ENCODE measurements at regions of chr5 and their contacts with region 1.

Region 1: DNA sequence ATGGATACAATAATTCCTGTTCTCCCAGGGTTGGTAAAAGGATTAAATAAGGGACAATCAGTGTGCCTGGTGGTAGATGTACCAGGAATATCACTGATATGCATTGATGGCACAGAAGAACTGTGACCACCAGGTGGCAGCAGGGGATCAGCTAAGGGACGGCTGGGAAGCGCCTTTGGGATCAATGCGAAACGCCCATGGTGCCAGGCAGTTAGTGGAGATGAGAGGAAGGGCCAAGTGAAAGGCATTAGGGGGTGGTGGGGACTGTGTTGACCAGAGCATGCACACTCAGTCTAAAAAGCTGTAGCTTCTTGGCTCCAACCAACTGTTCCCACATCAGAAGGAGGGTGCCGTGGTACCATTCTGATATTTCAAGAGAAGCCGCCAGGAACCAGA is 55.6 kb downstream of the ARHGEF37 start:
- DNase-seq: peak in 1 of 2 donors; percentile 87
- H3K4me3 ChIP-seq: no peak overlapping the region
- H3K27ac ChIP-seq: no peak overlapping the region
- H3K4me1 ChIP-seq: peaks cover 26 to 48% (median 33%) of the 10 kb centered on the region in 4 donors
- H3K27me3 ChIP-seq: no peaks in the 10 kb centered on the region
- CTCF ChIP-seq: peak in 5 of 7 experiments; percentile 56 to 93 (median 81)
- EP300 ChIP-seq: no peak
- POLR2A ChIP-seq: no peak

Region 2: DNA sequence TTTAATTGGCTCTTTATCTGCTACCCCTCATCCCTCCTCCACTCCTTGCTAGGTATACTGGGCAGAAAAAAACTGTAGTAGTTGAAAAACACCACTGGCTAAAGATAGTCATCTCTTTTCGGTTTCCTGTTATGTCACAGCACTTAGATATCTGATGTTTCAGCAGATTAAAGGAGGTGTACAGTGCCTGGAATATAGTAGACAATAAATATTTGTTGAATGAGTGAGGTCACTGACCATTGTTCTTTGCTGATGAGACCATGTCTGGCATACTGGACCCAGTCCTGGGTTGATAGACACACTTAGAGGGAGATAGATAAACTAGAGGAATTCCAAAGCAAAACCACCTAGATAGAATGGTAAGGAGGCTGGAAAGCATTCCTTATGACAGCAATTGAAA is 288.3 kb before region 1 on chr5:
- intact Hi-C with region 1: no loop called
- DNase-seq: no peak
- H3K4me3 ChIP-seq: no peak overlapping the region
- H3K27ac ChIP-seq: peak overlapping the region in 2 of 5 donors; percentile 1 to 14
- H3K4me1 ChIP-seq: peaks cover 16 to 42% (median 23%) of the 10 kb centered on the region in 4 donors
- H3K27me3 ChIP-seq: no peaks in the 10 kb centered on the region
- CTCF ChIP-seq: no peak
- EP300 ChIP-seq: no peak
- POLR2A ChIP-seq: no peak

Region 3: DNA sequence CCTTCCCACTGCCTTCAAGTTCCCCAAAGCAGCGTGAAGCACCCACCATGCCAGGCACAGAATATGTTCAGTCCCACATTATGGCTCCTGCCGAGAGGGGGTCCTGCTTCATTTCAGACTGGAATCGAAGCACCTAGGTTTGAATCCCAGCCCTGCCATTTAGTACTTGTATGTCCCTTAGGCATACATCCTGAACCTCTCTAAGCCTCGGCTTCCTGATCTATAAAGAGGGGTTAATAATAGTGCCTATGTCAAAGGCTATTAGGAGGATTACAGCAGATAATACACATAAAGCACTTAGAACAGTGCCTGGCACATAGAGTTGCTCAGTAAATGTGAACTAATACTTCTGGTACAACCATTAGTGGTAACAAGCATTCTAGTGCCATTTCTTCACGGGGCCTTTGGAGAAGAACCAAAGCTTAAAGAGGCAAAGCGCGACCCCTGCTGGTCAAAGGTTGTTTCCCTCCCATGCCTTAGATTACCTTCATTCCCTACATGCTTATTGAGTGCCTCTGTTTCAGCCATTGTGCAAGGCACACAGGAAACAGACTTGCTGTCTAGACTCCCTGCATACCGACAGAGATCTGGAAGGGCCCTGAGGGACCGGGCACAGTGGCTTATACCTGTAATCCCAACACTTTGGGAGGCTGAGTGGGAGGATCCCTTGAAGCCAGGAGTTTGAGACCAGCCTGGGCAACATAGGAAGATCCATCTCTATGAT is 191.5 kb after region 1 on chr5:
- intact Hi-C with region 1: loop called (anchors 5 kb)
- DNase-seq: peak; percentile 91 to 95
- H3K4me3 ChIP-seq: no peak overlapping the region
- H3K27ac ChIP-seq: peak overlapping the region in 3 of 5 donors; percentile 1 to 85 (median 54)
- H3K4me1 ChIP-seq: peaks cover 3 to 43% (median 21%) of the 10 kb centered on the region in 4 donors
- H3K27me3 ChIP-seq: no peaks in the 10 kb centered on the region
- CTCF ChIP-seq: peak in 6 of 7 experiments; percentile 36 to 93 (median 88)
- EP300 ChIP-seq: no peak
- POLR2A ChIP-seq: no peak

Region 4: GRCh38 chr5:149990518-149991376 is 353.9 kb after region 1 on chr5:
- intact Hi-C with region 1: loop called (anchors 10 kb)
- DNase-seq: peak; percentile 81 to 93
- H3K4me3 ChIP-seq: no peak overlapping the region
- H3K27ac ChIP-seq: no peak overlapping the region
- H3K4me1 ChIP-seq: peaks cover 0 to 4% (median 0%) of the 10 kb centered on the region in 4 donors
- H3K27me3 ChIP-seq: no peaks in the 10 kb centered on the region
- CTCF ChIP-seq: peak in 5 of 7 experiments; percentile 81 to 91 (median 90)
- EP300 ChIP-seq: no peak
- POLR2A ChIP-seq: no peak